ENCODE measurements at regions of chr5 and their contacts with region 1.

Region 1: DNA sequence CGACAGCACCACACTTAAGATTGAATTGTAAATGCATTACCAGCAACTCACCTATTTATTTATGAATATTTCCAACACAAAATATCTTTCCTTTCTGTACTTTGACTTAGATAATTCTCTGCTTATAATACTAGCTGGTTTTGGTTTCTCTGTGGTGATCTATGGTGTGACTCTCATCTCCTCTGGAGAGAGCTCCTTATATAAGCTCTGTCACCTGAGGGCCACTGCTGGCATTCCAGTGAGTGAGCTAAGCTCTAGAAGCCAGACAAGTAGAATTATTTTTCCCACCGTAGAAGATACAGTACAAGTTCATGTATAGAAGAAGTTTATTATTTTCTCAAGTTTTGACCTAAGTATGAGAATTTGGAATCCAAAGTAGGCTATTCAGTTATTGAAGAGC is 111.5 kb downstream of the CDC42SE2 start:
- DNase-seq: no peak
- ATAC-seq: no peak
- H3K4me3 Mint-ChIP-seq: peak overlapping the region; percentile 70
- H3K27ac Mint-ChIP-seq: peak overlapping the region; percentile 82
- H3K4me1 Mint-ChIP-seq: peaks cover 95% of the 10 kb centered on the region
- H3K27me3 Mint-ChIP-seq: no peaks in the 10 kb centered on the region
- CTCF ChIP-seq: no peak

Region 2: GRCh38 chr5:131364507-131365050 is 10.8 kb before region 1 on chr5:
- CTCF ChIA-PET with region 1: interaction called, 3 read pairs
- POLR2A ChIA-PET with region 1: interaction called, 4 read pairs
- intact Hi-C with region 1: loop called (anchors 1 kb)
- DNase-seq: no peak
- ATAC-seq: no peak
- H3K4me3 Mint-ChIP-seq: no peak overlapping the region
- H3K27ac Mint-ChIP-seq: peak overlapping the region; percentile 80
- H3K4me1 Mint-ChIP-seq: peaks cover 42% of the 10 kb centered on the region
- H3K27me3 Mint-ChIP-seq: no peaks in the 10 kb centered on the region
- CTCF ChIP-seq: no peak

Region 3: GRCh38 chr5:131441184-131441583 is 65.8 kb after region 1 on chr5:
- CTCF ChIA-PET with region 1: no interaction called
- POLR2A ChIA-PET with region 1: no interaction called
- intact Hi-C with region 1: no loop called
- DNase-seq: no peak
- ATAC-seq: no peak
- H3K4me3 Mint-ChIP-seq: no peak overlapping the region
- H3K27ac Mint-ChIP-seq: no peak overlapping the region
- H3K4me1 Mint-ChIP-seq: no peaks in the 10 kb centered on the region
- H3K27me3 Mint-ChIP-seq: no peaks in the 10 kb centered on the region
- CTCF ChIP-seq: no peak

Region 4: GRCh38 chr5:131595088-131596033 is 220.0 kb after region 1 on chr5:
- CTCF ChIA-PET with region 1: no interaction called
- POLR2A ChIA-PET with region 1: no interaction called
- intact Hi-C with region 1: no loop called
- DNase-seq: no peak
- ATAC-seq: no peak
- H3K4me3 Mint-ChIP-seq: peak overlapping the region; percentile 3
- H3K27ac Mint-ChIP-seq: no peak overlapping the region
- H3K4me1 Mint-ChIP-seq: peaks cover 34% of the 10 kb centered on the region
- H3K27me3 Mint-ChIP-seq: no peaks in the 10 kb centered on the region
- CTCF ChIP-seq: no peak